WTC11 (cell line): ENCODE measurements at regions of chr10 and their contacts with region 1.

Region 1: DNA sequence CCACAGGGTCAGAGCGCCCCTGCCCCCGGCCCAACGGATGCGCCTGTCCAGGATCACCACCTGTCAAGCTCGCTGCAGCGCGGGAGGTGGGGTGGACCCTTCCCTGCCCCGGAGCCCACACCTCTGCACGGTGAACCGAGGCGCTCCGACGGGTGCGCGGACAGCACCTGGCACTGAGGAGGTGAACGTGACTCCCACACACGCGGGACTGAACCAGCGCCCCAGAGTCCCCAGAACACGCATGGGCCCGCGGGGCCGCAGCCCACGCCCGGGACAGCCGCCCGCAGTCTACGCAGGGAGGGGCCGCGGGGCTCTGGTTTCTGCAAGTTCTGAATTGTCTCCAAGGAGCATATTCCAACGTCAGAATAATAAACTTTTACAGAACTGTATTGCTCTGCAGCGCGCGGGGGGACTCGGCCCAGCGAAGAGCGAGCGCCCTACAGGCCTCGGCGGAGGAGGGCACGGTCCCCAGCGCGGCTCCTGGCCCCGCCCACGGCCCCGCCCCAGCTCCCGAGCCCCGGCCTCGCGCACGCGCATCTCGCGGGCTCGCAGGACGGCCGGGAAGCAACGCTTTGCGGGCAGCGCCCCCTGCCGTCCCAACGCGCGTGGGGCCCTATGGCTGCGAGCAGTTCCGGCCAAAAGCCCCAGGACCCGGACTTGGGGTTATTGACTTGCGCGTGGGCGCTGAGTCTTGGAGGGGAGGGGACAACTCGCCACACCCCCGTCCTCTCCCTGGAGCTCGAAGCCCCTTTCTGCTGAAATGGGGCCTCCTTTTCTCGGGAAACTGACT is 29.7 kb downstream of the OAT start:
- DNase-seq: peak; percentile 93
- ATAC-seq: peak; percentile 82
- H3K4me3 Mint-ChIP-seq: peak overlapping the region; percentile 53
- H3K27ac Mint-ChIP-seq: no peak overlapping the region
- H3K4me1 Mint-ChIP-seq: peaks cover 17% of the 10 kb centered on the region
- H3K27me3 Mint-ChIP-seq: peaks cover 10% of the 10 kb centered on the region
- CTCF ChIP-seq: peak; percentile 92

Region 2: GRCh38 chr10:124025660-124026588 is 363.1 kb before region 1 on chr10:
- CTCF ChIA-PET with region 1: interaction called, 10 read pairs
- POLR2A ChIA-PET with region 1: no interaction called
- DNase-seq: no peak
- ATAC-seq: no peak
- H3K4me3 Mint-ChIP-seq: no peak overlapping the region
- H3K27ac Mint-ChIP-seq: no peak overlapping the region
- H3K4me1 Mint-ChIP-seq: peaks cover 56% of the 10 kb centered on the region
- H3K27me3 Mint-ChIP-seq: no peaks in the 10 kb centered on the region
- CTCF ChIP-seq: no peak

Region 3: GRCh38 chr10:124240839-124241291 is 148.2 kb before region 1 on chr10:
- CTCF ChIA-PET with region 1: interaction called, 20 read pairs
- POLR2A ChIA-PET with region 1: no interaction called
- DNase-seq: peak; percentile 18
- ATAC-seq: peak; percentile 82
- H3K4me3 Mint-ChIP-seq: no peak overlapping the region
- H3K27ac Mint-ChIP-seq: no peak overlapping the region
- H3K4me1 Mint-ChIP-seq: peaks cover 22% of the 10 kb centered on the region
- H3K27me3 Mint-ChIP-seq: peaks cover 4% of the 10 kb centered on the region; the same call in 1 of the 2 replicates
- CTCF ChIP-seq: no peak

Region 4: DNA sequence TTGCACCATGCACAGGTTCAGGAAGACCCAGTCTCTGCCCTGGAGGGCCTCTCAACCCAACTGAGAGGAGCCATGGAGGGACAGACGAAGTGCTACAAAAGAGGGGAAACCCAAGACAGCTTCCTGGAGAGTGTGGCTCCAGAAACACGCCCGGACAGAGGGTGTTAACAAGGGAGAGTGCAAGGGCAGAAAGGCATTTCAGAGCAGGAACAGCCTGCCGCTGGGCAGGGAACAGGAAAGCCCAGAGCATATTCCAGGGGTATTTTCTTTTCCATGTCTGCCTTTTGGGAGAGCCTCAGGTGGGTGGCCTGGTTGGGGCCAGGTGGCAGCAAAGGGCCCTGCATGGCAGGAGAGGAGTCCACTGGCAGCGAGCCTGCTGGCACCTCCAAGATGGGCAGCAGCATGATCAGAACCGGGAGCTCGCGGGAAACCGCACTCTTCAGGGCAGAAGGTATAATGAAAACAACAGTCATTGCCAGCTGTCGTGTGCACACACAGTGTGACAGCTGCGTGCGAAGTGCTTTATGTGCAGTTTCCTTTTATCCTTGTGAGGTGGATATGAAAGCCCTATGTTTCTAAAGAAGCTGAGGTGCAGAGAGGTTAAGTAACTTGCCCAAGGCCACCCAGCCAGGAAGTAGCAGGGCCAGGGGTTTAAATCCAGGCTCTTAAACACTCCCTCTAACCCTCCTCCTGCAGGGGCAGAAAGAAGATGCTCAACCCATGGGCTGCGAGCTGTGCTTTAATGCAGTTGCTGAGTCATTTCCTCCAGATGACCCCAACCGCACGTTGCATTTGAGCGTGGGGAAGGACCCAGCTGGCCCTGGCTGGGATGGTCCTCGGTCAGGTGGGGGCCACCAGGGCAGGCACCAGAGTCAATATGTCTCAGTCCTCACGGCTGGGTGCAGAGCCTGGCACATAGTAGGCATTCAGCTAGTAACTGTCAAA is 98.9 kb before region 1 on chr10:
- CTCF ChIA-PET with region 1: interaction called, 51 read pairs
- POLR2A ChIA-PET with region 1: no interaction called
- DNase-seq: peak; percentile 7
- ATAC-seq: no peak
- H3K4me3 Mint-ChIP-seq: no peak overlapping the region
- H3K27ac Mint-ChIP-seq: no peak overlapping the region
- H3K4me1 Mint-ChIP-seq: no peaks in the 10 kb centered on the region
- H3K27me3 Mint-ChIP-seq: no peaks in the 10 kb centered on the region
- CTCF ChIP-seq: no peak

Region 5: DNA sequence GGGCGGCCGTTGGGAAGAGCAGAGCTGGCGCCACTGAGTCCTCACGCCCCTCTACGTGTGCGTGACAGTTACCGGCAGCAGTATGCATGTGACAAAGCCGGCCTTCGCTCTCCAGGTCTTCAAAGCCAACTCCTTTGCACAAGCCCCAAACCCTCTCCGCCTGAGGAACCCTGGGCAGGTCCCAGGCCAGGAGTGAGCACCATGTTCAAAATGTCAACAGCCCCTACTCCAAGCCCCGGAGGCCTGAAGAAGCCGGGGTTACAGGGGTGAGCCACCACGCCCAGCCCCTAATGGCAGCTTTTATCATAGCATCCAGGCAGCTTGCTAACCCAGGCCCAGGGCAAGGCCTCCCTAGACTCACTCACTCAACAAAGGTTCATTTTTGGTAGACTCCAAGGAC is 41.1 kb before region 1 on chr10:
- CTCF ChIA-PET with region 1: interaction called, 16 read pairs
- POLR2A ChIA-PET with region 1: no interaction called
- DNase-seq: peak; percentile 46
- ATAC-seq: peak; percentile 91
- H3K4me3 Mint-ChIP-seq: no peak overlapping the region
- H3K27ac Mint-ChIP-seq: no peak overlapping the region
- H3K4me1 Mint-ChIP-seq: 0 out of 2 replicates have a peak, but pooled peaks cover 2% of the 10 kb centered on the region
- H3K27me3 Mint-ChIP-seq: no peaks in the 10 kb centered on the region; the same call in 1 of the 2 replicates
- CTCF ChIP-seq: 0 out of 2 replicates have a peak, but pooled peaks have one; percentile 12

Region 6: DNA sequence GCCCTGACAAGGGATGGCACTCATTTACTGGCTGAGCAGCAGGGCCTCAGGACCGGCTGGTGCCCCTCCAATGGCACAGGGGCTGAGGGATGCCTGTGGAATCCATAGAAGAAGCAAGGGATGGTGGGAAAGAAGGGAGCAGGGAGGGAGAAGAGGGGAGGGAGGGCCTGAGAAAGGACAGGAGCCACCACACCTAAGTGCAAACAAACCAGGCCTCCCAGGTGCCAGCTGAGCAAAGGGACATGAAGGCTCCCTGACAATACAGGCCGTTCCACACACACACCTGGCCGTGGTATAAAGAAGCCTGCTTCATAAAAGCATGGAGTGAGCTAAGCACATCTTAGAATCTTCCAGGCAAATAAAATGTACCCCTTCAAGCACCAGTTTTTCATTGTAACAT is 24.4 kb before region 1 on chr10:
- CTCF ChIA-PET with region 1: interaction called, 19 read pairs
- POLR2A ChIA-PET with region 1: no interaction called
- DNase-seq: no peak
- ATAC-seq: no peak
- H3K4me3 Mint-ChIP-seq: no peak overlapping the region
- H3K27ac Mint-ChIP-seq: no peak overlapping the region
- H3K4me1 Mint-ChIP-seq: peaks cover 11% of the 10 kb centered on the region
- H3K27me3 Mint-ChIP-seq: no peaks in the 10 kb centered on the region; the same call in 1 of the 2 replicates
- CTCF ChIP-seq: no peak

Region 7: DNA sequence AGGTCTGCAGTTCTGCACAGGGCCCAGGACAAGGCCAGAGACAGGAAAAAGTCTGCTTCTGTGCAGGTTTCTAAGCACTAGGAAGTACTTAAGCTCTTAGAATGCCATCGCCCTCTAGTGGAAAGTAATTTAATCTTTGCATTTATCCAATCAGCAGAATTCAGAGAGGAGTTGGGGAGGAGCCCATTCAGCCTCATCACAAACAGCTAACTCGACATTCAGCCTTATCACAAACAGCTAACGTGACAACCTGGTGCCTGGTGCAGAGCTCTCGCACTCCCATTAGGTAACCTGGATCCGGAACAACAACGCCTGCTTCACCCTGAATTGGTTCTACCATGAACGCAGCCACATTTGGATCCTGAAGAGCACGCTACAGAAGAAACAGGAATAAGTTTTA is 14.5 kb after region 1 on chr10:
- CTCF ChIA-PET with region 1: interaction called, 40 read pairs
- POLR2A ChIA-PET with region 1: interaction called, 3 read pairs
- DNase-seq: peak; percentile 30
- ATAC-seq: peak; percentile 98
- H3K4me3 Mint-ChIP-seq: no peak overlapping the region
- H3K27ac Mint-ChIP-seq: peak overlapping the region; percentile 95
- H3K4me1 Mint-ChIP-seq: peaks cover 9% of the 10 kb centered on the region
- H3K27me3 Mint-ChIP-seq: no peaks in the 10 kb centered on the region
- CTCF ChIP-seq: no peak

Region 8: DNA sequence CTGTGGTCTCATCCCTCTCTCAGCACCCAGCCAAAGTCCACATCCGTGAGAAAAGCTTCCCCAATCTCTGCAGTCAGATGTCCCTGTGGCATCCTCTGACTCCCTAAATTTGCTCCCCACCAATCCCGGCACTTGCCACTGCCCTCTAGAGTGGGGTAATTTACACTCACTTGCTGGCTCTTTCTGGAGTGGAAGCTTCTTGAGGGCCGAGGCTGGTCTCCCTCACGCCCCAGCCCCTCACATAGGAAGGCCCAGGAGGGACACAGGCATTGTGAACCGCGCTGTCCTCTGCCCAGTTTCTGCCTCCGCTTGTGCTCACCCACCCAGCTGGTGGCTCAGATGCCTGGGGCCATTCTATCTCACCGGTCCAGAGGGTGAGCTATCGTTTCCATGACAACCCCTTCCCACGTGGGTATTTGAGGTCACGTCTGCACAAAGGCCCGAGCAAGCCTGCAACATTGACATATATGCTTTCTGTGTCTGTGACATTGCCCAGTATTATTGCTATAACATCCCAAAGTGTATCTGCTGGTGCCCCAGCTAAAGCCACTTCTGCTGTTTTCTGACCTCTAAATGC is 868.6 kb after region 1 on chr10:
- CTCF ChIA-PET with region 1: no interaction called
- POLR2A ChIA-PET with region 1: no interaction called
- DNase-seq: no peak
- ATAC-seq: no peak
- H3K4me3 Mint-ChIP-seq: no peak overlapping the region
- H3K27ac Mint-ChIP-seq: no peak overlapping the region
- H3K4me1 Mint-ChIP-seq: peaks cover 7% of the 10 kb centered on the region
- H3K27me3 Mint-ChIP-seq: no peaks in the 10 kb centered on the region; the same call in 1 of the 2 replicates
- CTCF ChIP-seq: no peak